MCF 10A (cell line): ENCODE measurements at regions of chr13 and their contacts with region 1.

Region 1: GRCh38 chr13:114017028-114017630 is 43.3 kb upstream of the C13orf46 start:
- DNase-seq: peak; percentile 20
- H3K4me3 Mint-ChIP-seq: no peak overlapping the region
- H3K27ac Mint-ChIP-seq: no peak overlapping the region
- H3K4me1 Mint-ChIP-seq: peaks cover 13% of the 10 kb centered on the region
- H3K27me3 Mint-ChIP-seq: no peaks in the 10 kb centered on the region
- CTCF ChIP-seq: no peak

Region 2: GRCh38 chr13:113981201-113981605 is 35.9 kb before region 1 on chr13:
- CTCF ChIA-PET with region 1: no interaction called
- POLR2A ChIA-PET with region 1: interaction called, 10 read pairs
- intact Hi-C with region 1: no loop called
- DNase-seq: peak; percentile 99
- H3K4me3 Mint-ChIP-seq: peak overlapping the region; percentile 55
- H3K27ac Mint-ChIP-seq: no peak overlapping the region
- H3K4me1 Mint-ChIP-seq: peaks cover 33% of the 10 kb centered on the region
- H3K27me3 Mint-ChIP-seq: no peaks in the 10 kb centered on the region
- CTCF ChIP-seq: no peak

Region 3: GRCh38 chr13:114090476-114090875 is 73.3 kb after region 1 on chr13:
- CTCF ChIA-PET with region 1: no interaction called
- POLR2A ChIA-PET with region 1: no interaction called
- intact Hi-C with region 1: no loop called
- DNase-seq: no peak
- H3K4me3 Mint-ChIP-seq: no peak overlapping the region
- H3K27ac Mint-ChIP-seq: no peak overlapping the region
- H3K4me1 Mint-ChIP-seq: no peaks in the 10 kb centered on the region
- H3K27me3 Mint-ChIP-seq: no peaks in the 10 kb centered on the region
- CTCF ChIP-seq: no peak